HepG2 (cell line): ENCODE measurements at regions of chr9 and their contacts with region 1.

Region 1: DNA sequence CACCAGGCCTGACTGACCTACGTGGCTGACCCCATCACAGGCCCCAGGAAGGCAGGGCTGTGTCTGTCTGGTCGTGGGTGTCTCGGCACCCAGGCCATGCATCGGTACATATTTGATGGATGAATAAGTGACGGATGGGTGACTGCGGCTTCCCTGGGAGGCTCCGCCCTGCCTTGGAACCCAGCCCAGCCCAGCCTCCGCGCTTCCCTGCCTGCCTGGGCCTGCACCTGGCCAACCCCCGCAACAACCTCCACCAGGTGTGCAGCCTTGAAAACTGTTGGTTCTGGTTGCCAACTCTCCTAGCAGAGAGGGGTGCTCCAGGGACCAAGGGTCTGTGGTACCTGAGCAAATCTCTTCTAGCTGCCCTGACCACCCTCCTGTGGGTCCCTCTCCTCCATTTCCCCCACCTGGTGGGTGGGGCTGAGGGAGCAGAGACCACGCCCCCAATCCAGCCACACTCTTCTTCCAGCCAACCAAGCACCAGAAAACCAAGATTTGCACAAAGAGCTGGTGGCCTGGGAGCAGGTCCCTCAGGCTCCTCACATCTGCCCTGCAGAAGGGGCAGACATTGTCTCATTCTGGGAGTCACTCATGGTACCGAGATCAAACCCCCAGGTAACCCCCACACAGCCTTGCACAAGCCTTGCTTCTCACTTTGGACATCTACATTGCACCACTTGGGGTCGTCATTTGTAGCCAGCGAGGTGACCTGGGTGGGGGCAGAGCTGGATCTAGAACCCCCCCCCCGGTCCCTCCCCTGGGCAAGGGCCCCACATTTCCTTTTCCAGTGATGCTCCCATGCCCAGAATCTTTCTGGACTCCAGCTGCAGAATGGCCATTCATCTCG is 100.6 kb upstream of the IER5L start:
- DNase-seq: no peak
- ATAC-seq: peak; percentile 22
- H3K4me3 ChIP-seq: no peak overlapping the region
- H3K27ac ChIP-seq: no peak overlapping the region
- H3K4me1 ChIP-seq: peaks cover 47% of the 10 kb centered on the region
- H3K27me3 ChIP-seq: peaks cover 0 to 53% of the 10 kb centered on the region in 2 experiments
- CTCF ChIP-seq: no peak
- EP300 ChIP-seq: no peak
- POLR2A ChIP-seq: no peak
- RAD21 ChIP-seq: no peak

Region 2: DNA sequence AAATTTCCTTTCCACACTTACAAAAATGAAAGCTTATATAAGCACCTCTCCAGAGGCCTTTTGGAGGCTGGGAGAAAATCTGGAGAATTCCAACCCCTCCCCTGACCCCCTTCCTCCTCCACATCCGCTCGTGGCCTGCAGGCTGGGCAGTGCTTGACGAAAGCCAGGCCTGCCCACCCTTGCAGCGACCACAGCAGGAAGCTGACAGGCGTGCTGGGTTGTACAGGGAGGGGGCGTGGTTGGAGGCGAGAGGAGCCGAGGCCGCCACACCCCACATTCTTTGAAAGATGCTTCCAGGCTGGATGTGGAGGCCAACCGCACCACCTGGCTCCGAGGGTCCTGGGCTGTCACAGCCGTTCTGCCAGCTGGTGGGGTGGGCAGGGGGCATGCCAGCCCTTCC is 52.8 kb before region 1 on chr9:
- CTCF ChIA-PET with region 1: no interaction called
- POLR2A ChIA-PET with region 1: no interaction called
- in situ Hi-C with region 1: loop called (anchors 5 kb)
- intact Hi-C with region 1: no loop called
- DNase-seq: no peak
- ATAC-seq: no peak
- H3K4me3 ChIP-seq: no peak overlapping the region
- H3K27ac ChIP-seq: no peak overlapping the region
- H3K4me1 ChIP-seq: peaks cover 16% of the 10 kb centered on the region
- H3K27me3 ChIP-seq: peaks cover 2 to 29% of the 10 kb centered on the region in 2 experiments; a peak in 2 of 5 replicates
- CTCF ChIP-seq: no peak
- EP300 ChIP-seq: no peak
- POLR2A ChIP-seq: no peak
- RAD21 ChIP-seq: no peak